ENCODE measurements at regions of chr1 and their contacts with region 1.

Region 1: GRCh38 chr1:168603501-168604110 is 27.2 kb downstream of the XCL1 start:
- DNase-seq: peak; percentile 69
- H3K4me3 ChIP-seq: no peak overlapping the region
- H3K27ac ChIP-seq: no peak overlapping the region
- H3K4me1 ChIP-seq: peaks cover 23% of the 10 kb centered on the region
- H3K27me3 ChIP-seq: no peaks in the 10 kb centered on the region
- CTCF ChIP-seq: peak; percentile 89

Region 2: DNA sequence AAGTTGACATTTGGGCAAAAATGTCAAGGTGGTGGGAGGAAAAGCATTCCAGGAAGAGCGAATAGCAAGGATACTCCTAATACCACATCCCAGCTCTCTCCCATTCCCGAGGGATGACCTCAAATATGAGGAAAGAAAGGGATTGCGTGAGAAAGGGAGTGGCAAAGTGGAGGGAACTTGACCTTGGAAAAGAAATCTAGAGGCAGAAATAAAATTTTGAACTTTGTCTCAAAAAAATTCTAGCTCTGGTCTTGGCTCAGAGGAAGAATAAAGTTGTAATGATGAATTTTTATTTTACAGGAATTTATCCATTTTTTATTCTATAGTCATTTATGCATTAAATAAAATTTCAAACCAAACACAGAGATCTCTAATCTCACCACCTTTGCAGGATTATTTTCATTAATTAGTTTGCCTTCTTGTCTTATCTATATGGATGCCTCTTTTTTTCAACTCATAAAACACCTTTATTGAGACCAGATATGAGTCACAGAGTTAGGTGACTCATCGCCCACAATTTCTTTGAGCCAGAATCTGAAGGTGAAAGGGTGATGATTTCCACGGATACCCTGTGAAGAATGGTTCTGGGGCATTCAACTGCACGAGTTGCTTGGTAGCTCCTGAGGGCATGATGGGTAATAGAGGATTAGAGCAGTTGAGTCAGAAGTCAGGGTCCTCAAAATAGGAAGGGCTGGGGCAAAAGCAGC is 194.9 kb before region 1 on chr1:
- intact Hi-C with region 1: no loop called
- DNase-seq: no peak
- H3K4me3 ChIP-seq: no peak overlapping the region
- H3K27ac ChIP-seq: no peak overlapping the region
- H3K4me1 ChIP-seq: no peaks in the 10 kb centered on the region
- H3K27me3 ChIP-seq: no peaks in the 10 kb centered on the region
- CTCF ChIP-seq: no peak

Region 3: GRCh38 chr1:169122976-169123375 is 519.4 kb after region 1 on chr1:
- intact Hi-C with region 1: loop called (anchors 10 kb)
- DNase-seq: no peak
- H3K4me3 ChIP-seq: no peak overlapping the region
- H3K27ac ChIP-seq: no peak overlapping the region
- H3K4me1 ChIP-seq: peaks cover 77% of the 10 kb centered on the region
- H3K27me3 ChIP-seq: no peaks in the 10 kb centered on the region
- CTCF ChIP-seq: no peak

Region 4: GRCh38 chr1:169348383-169349036 is 744.9 kb after region 1 on chr1:
- intact Hi-C with region 1: loop called (anchors 5 kb)
- DNase-seq: no peak
- H3K4me3 ChIP-seq: no peak overlapping the region
- H3K27ac ChIP-seq: no peak overlapping the region
- H3K4me1 ChIP-seq: no peaks in the 10 kb centered on the region
- H3K27me3 ChIP-seq: no peaks in the 10 kb centered on the region
- CTCF ChIP-seq: peak; percentile 86

Measured in left ventricle myocardium inferior (tissue), 1 donor.